ENCODE measurements at regions of chr20 and their contacts with region 1.

Region 1: GRCh38 chr20:34129518-34130162 is 17.6 kb upstream of the EIF2S2 start:
- DNase-seq: peak; percentile 50
- H3K4me3 Mint-ChIP-seq: no peak overlapping the region
- H3K27ac Mint-ChIP-seq: no peak overlapping the region
- H3K4me1 Mint-ChIP-seq: peaks cover 12% of the 10 kb centered on the region
- H3K27me3 Mint-ChIP-seq: peaks cover 18% of the 10 kb centered on the region

Region 2: GRCh38 chr20:33862709-33863403 is 266.8 kb before region 1 on chr20:
- intact Hi-C with region 1: loop called (anchors 1 kb)
- DNase-seq: no peak
- H3K4me3 Mint-ChIP-seq: no peak overlapping the region
- H3K27ac Mint-ChIP-seq: no peak overlapping the region
- H3K4me1 Mint-ChIP-seq: peaks cover 26% of the 10 kb centered on the region
- H3K27me3 Mint-ChIP-seq: peaks cover 1% of the 10 kb centered on the region

Region 3: GRCh38 chr20:33933469-33933909 is 196.2 kb before region 1 on chr20:
- intact Hi-C with region 1: loop called (anchors 1 kb)
- DNase-seq: peak; percentile 42
- H3K4me3 Mint-ChIP-seq: no peak overlapping the region
- H3K27ac Mint-ChIP-seq: no peak overlapping the region
- H3K4me1 Mint-ChIP-seq: no peaks in the 10 kb centered on the region
- H3K27me3 Mint-ChIP-seq: peaks cover 3% of the 10 kb centered on the region

Region 4: DNA sequence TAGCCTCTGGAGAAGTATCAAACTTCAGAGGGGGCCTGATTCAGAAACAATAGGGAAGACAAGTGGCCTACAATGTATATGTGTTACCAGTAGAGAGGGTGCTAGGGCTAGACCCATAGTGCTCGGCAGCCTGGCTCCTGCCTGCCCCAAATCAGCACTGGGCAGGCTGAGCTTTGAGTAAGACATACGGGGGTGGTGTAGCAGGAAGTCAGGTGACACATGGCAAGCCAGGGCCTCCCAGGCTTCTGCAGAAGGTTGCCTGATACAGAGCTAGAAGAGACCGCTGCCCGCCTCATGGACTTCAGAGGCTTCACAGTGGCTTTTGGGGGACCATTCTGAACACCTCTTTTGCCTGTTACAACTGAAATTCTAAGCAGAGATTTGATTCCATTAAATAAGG is 92.5 kb before region 1 on chr20:
- intact Hi-C with region 1: no loop called
- DNase-seq: peak; percentile 8
- H3K4me3 Mint-ChIP-seq: peak overlapping the region; percentile 63
- H3K27ac Mint-ChIP-seq: peak overlapping the region; percentile 64
- H3K4me1 Mint-ChIP-seq: peaks cover 27% of the 10 kb centered on the region
- H3K27me3 Mint-ChIP-seq: no peaks in the 10 kb centered on the region

Region 5: GRCh38 chr20:34069341-34070078 is 60.1 kb before region 1 on chr20:
- intact Hi-C with region 1: loop called (anchors 1 kb)
- DNase-seq: peak; percentile 25
- H3K4me3 Mint-ChIP-seq: no peak overlapping the region
- H3K27ac Mint-ChIP-seq: no peak overlapping the region
- H3K4me1 Mint-ChIP-seq: peaks cover 35% of the 10 kb centered on the region
- H3K27me3 Mint-ChIP-seq: no peaks in the 10 kb centered on the region

Region 6: GRCh38 chr20:34111702-34112599 is 17.7 kb before region 1 on chr20 and contains the start of gene EIF2S2:
- intact Hi-C with region 1: loop called (anchors 1 kb)
- DNase-seq: peak; percentile 96
- H3K4me3 Mint-ChIP-seq: peak within 1 kb of the TSS; percentile 88
- H3K27ac Mint-ChIP-seq: peak within 1 kb of the TSS; percentile 98
- H3K4me1 Mint-ChIP-seq: peaks cover 46% of the 10 kb centered on the region
- H3K27me3 Mint-ChIP-seq: peaks cover 1% of the 10 kb centered on the region
- total RNA-seq, gene EIF2S2: 99.8 and 105 TPM in 2 replicates

Region 7: DNA sequence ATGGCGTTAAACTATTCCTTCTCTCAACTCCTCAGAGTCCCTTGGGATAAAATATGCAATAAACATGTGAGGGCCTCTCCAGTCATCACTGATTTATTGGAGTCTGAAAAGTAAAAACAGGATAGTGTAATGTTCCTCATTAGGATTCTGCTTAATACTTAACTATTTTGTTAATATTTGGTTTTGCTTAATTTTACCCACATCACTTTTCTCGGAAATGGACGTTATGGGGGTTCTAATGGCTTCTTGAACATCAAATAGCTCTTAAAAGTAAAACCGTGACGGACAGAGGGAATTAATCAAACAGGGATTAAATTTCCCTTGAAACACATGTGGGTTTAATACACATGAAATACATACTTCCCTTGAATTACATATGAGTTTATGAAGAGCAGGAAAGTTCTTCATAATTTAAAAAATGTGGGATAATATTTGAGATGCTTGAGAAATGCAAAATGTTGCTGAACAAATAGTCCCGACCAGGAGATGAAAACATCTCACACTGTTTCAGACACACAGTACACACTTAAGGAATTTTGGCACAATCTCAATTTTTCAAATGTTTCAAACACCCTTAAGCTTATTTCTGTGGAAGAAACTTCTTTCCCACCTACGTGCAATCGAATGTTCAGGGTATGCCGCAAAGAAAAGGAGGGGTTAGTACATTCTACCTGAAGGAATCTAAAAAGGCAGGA is 20.8 kb after region 1 on chr20:
- intact Hi-C with region 1: no loop called
- DNase-seq: no peak
- H3K4me3 Mint-ChIP-seq: no peak overlapping the region
- H3K27ac Mint-ChIP-seq: no peak overlapping the region
- H3K4me1 Mint-ChIP-seq: no peaks in the 10 kb centered on the region
- H3K27me3 Mint-ChIP-seq: peaks cover 4% of the 10 kb centered on the region